ENCODE measurements at regions of chr6 and their contacts with region 1.

Region 1: DNA sequence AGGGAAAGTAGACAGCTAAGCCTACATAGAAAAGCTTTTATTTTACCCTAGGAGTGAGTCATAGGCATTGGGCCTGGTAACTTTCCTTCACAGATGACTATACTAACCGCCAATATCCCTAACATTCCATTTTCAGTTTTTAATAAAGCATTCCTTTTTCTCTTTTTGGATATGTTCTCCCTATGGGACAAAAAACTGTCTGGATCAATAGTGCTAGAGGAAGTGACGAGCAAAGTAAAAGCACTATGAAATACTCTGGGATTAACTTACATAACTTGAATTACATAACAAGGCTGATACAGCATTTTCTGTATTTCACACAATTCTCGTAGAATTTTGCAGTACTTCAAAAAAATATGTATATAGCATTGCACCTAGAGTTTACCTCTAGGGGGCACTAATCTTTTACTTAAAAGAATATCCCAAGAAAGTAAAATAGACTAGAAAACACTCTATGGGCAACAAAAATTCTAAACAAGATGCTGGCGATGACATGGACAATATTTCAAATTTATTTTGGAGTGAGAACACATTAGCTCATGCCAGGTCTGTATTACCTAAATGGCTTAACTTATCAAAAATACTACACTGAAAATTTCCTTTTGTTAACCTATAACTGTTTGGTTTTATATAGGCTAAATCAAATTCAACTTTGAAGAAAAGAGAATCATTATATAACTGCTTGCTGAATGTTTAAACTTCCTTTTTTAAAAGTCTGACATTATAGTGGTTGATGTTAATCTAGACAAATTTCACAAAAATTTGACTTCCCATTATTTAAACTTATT is 66.3 kb upstream of the DST start:
- DNase-seq: no peak
- ATAC-seq: peak; percentile 34

Region 2: GRCh38 chr6:56370561-56371211 is 338.3 kb before region 1 on chr6:
- intact Hi-C with region 1: no loop called
- DNase-seq: no peak
- ATAC-seq: peak; percentile 78

Region 3: DNA sequence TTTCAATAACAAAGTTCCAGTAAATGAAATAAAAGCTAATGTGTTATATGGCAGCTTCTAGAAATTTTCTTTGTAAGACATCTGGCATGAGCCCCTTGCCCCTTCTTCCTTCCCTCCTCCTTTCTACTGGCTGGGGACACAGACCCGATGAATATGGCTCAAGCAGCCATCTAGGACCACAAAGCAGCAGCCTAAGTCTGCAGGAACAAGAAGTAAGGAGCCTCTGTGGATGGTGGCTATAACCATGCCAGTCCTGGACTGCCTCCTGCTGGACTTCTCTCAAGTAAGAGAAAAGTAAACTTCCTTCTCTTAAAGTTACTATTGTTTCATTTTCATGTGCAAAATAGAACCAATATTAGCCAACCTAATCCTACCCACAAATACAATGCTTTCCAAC is 48.6 kb after region 1 on chr6:
- intact Hi-C with region 1: loop called (anchors 5 kb)
- DNase-seq: no peak
- ATAC-seq: peak; percentile 57

Region 4: DNA sequence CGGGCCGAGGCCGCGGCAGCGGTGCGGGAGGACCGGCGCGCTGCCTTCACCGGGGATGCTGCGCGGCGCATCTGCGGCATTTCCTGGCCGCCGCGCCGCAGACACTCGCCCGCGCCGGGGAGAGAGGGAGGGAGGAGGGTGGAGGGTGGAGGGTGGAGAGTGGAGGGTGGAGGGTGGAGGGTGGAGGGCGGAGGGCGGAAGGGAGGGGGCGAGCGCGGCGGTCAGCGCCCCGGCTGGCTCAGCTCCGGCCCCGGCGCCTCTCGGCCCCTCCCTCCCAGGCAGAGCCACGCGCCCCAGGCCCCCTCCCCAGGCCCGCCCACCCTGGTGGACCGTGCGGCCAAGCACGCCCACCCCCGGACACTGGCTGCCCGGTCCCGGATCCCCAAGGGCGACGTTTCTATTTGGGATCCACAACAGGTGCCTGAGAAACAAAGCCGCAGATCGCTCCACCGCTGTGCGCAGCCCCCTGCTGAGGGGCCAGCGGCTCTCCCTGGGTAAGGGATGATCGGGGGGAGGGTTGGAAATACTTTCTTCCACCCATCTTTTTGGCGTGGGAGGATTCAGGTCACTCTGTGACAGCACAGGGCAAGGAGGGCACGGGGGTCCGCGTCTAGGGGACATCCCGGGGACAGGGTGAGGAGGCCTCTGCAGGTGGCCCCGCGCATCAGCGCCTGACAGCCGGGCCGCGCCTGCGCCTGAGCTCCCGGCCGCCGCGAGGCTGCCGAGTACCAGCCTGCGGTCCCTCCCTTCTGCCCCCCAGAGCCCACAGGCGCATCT is 134.8 kb after region 1 on chr6:
- intact Hi-C with region 1: loop called (anchors 5 kb)
- DNase-seq: peak; percentile 88
- ATAC-seq: peak; percentile 93

Region 5: GRCh38 chr6:56851541-56852259 is 142.7 kb after region 1 on chr6:
- intact Hi-C with region 1: loop called (anchors 5 kb)
- DNase-seq: peak; percentile 35
- ATAC-seq: peak; percentile 89

Measured in left ventricle myocardium superior (tissue), 1 donor.